ENCODE measurements at regions of chr4 and their contacts with region 1.

Region 1: GRCh38 chr4:159201168-159201567 is 98.3 kb downstream of the RAPGEF2 start:
- DNase-seq: no peak
- H3K4me3 ChIP-seq: no peak overlapping the region
- CTCF ChIP-seq: no peak

Region 2: DNA sequence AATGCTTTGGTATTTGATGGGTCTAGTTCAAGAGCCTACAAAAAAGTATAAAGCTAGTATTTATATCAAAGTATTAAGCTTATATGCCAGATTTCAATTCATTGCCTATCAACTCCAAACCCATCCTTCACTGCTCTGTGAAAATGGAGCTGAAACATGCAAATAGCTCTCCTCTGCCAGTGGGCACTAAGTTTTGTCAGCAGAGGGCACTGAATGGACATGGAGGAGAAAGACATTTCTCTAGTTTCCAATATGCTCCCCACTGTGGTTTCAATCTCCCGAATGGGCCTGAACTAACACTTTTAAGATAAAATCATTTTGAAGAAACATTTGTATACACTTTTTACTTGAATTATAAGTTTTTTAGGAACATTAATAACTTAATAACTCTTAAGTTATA is 490.4 kb before region 1 on chr4:
- CTCF ChIA-PET with region 1: interaction called, 32 read pairs
- POLR2A ChIA-PET with region 1: no interaction called
- DNase-seq: no peak
- H3K4me3 ChIP-seq: no peak overlapping the region
- CTCF ChIP-seq: peak; percentile 39

Region 3: DNA sequence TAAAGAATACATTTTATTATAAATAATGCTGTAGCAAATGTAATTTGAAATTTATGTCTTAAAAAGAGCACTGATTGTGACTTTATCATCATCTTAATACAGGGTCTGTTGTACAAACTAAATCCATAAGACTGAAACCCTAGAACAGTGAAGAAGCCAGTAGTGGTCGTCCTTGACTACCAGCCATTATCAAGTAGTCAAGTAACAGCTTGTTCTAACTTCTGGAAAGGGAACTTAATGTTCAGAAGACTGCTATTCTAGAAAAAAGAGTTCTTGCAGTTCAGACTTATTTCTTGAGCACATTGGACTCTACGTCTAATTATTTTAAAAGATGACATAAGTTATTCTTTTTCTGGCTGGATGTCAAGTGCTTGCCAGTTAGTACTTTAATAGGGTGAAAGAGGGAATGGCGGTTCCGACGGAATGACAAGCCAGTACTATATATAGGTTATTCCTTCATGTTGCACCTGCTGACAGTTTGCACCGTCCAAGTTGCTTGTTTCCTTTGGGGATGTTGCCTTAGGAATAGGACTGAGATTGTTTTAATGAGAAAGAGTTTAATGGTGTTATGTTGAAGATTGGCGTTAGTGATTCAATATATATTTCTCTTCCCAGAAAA is 11.6 kb after region 1 on chr4:
- CTCF ChIA-PET with region 1: interaction called, 36 read pairs
- POLR2A ChIA-PET with region 1: no interaction called
- DNase-seq: no peak
- H3K4me3 ChIP-seq: no peak overlapping the region
- CTCF ChIP-seq: no peak

Region 4: DNA sequence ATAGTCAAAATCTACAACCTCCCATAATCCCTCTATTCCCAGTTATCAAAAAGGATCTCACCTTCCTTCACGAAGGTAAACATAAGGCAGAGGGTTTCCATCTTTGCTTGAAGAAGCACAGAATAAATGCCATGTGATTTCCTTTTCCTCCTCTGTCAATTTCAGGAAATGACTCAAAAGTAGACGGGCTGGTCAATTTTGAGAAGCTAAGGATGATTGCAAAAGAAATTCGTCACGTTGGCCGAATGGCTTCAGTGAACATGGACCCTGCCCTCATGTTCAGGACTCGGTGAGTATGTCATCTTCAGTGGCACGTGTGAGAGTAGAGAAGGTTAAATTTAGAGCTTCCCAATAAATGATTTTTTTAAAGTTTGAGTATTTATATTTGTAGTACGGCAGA is 141.9 kb after region 1 on chr4:
- CTCF ChIA-PET with region 1: no interaction called
- POLR2A ChIA-PET with region 1: no interaction called
- DNase-seq: no peak
- H3K4me3 ChIP-seq: no peak overlapping the region
- CTCF ChIP-seq: no peak

Region 5: DNA sequence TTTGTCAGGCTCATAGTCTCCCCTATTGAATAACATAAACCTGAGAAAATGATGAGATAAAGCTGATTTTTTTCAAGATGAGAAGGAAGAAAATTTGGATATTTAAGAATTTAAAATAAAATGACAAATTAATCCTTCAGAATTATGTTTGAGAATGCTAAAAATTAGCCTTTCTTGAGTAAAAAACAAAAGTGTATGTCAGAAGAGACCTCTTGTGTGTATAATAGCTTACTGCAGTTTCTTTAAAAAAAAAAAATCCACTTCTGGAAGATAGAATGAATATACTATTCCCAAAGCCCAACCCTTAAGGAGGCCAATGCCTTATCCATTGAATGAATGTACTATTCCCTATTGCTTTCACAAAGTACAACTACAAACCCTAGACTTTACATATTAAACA is 183.5 kb after region 1 on chr4:
- CTCF ChIA-PET with region 1: interaction called, 26 read pairs
- POLR2A ChIA-PET with region 1: no interaction called
- DNase-seq: no peak
- H3K4me3 ChIP-seq: no peak overlapping the region
- CTCF ChIP-seq: no peak

Region 6: GRCh38 chr4:159455675-159456237 is 254.6 kb after region 1 on chr4:
- CTCF ChIA-PET with region 1: interaction called, 14 read pairs
- POLR2A ChIA-PET with region 1: no interaction called
- DNase-seq: no peak
- H3K4me3 ChIP-seq: no peak overlapping the region
- CTCF ChIP-seq: peak; percentile 68

Measured in AG04449 (cell line).